ENCODE measurements at regions of chr1 and their contacts with region 1.

Region 1: DNA sequence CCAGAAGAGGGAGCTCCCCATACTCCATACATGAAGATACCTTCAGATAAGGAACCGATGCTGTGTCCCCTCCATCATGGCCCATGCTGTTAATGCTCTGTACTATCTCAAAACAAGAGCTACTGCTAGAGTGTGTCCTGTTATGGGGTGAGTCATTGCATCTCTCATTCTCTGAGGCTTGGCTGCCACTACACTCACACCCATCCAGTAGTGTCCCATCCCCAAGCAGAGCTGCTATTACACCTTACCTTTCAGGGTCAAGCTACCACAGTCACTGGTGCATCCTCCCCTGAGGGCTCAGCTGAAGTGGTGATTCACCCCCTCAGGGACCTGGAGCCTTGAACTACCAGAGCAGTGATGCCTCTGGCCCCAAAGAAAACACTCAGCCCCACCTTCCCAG is 198.5 kb downstream of the PLA2G4A start:
- DNase-seq: no peak
- H3K4me3 ChIP-seq: no peak overlapping the region
- H3K27ac ChIP-seq: no peak overlapping the region
- H3K4me1 ChIP-seq: no peaks in the 10 kb centered on the region
- CTCF ChIP-seq: no peak

Region 2: DNA sequence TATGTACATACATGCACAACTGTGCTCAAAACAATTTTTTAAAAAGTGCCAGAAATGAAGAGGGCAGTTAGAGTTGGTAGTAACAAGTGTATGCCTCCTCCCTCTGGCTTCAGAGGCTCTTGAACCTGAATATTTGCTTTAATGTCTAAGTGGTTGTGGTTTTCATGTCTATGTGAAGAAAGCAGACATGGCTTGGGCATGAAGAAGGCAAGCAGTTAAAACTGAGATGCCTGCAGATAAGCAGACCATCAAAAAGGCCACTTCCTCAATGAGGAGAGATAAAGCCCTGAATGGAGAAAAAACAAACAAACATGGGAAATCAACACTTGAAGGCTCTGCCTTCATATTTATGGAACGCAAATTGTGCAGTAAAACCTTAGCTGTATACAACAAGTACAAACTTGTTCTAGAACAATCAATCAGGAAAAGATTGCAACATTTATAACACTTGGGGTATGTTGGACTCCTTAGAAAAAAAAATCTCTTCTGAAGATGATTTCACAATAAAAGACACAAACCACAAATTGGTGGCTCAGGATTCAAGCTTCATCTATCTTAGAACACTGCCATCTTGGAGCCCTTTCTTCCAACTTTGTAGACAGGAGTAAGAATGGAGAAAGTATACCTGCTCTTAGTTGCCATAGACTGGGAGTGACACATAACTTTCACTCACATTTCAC is 251.2 kb before region 1 on chr1:
- CTCF ChIA-PET with region 1: no interaction called
- POLR2A ChIA-PET with region 1: no interaction called
- intact Hi-C with region 1: no loop called
- DNase-seq: no peak
- H3K4me3 ChIP-seq: no peak overlapping the region
- H3K27ac ChIP-seq: no peak overlapping the region
- H3K4me1 ChIP-seq: no peaks in the 10 kb centered on the region
- CTCF ChIP-seq: no peak

Region 3: GRCh38 chr1:187038789-187039188 is 11.5 kb after region 1 on chr1:
- CTCF ChIA-PET with region 1: no interaction called
- POLR2A ChIA-PET with region 1: interaction called, 15 read pairs
- intact Hi-C with region 1: no loop called
- DNase-seq: no peak
- H3K4me3 ChIP-seq: no peak overlapping the region
- H3K27ac ChIP-seq: no peak overlapping the region
- H3K4me1 ChIP-seq: no peaks in the 10 kb centered on the region
- CTCF ChIP-seq: no peak